ENCODE measurements at regions of chr9 and their contacts with region 1.

Region 1: DNA sequence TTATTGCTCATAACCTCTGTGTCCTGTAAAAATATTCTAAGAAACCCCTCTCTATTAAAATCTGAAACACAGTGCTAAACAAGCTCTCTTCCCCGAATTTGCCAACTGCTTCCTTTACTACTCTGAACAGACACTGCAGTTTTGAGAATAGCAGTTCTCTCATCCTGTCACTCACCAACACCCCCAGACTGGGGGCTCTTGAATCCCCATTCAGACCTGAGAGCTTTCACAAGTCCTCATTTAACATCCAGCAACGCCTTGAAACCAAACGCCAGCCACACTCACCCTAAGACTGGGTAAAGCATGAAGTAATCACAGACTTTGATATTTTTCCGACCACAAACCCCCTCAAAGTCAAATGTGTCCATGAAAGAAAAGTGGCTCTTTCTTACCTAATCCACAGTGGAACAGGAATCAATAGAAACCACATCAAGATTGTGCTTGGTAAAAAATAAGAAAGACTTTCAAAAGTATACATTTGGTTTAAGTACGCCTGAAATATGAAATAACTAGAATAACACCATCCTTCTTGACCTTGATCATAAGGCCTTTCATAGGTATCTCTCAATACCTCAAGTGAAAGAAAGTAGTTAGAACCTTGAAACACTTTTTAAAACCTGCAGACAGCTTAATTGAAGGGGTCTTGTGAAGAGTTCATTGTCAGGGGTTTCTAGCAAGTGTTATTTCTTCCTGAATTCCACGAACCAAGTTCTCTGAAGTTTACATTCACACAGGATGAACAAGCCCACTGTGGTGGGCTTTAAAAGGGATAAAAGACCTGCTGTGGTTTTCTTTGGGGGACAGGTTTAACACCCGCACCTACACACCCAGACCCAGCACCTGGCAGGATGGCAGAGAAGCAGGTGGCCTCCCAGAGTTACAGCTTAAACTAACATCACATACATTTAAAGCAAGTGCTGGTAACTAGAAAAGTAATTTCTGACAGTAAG is 412.6 kb downstream of the MLLT3 start:
- DNase-seq: peak; percentile 70
- ATAC-seq: peak; percentile 88
- H3K4me3 Mint-ChIP-seq: peak overlapping the region; percentile 18
- H3K27ac Mint-ChIP-seq: peak overlapping the region; percentile 95
- H3K4me1 Mint-ChIP-seq: peaks cover 50% of the 10 kb centered on the region
- H3K27me3 Mint-ChIP-seq: no peaks in the 10 kb centered on the region

Region 2: GRCh38 chr9:19875291-19875920 is 334.3 kb before region 1 on chr9:
- POLR2A ChIA-PET with region 1: no interaction called
- DNase-seq: no peak
- ATAC-seq: no peak
- H3K4me3 Mint-ChIP-seq: no peak overlapping the region
- H3K27ac Mint-ChIP-seq: no peak overlapping the region
- H3K4me1 Mint-ChIP-seq: no peaks in the 10 kb centered on the region
- H3K27me3 Mint-ChIP-seq: peaks cover 30% of the 10 kb centered on the region

Region 3: DNA sequence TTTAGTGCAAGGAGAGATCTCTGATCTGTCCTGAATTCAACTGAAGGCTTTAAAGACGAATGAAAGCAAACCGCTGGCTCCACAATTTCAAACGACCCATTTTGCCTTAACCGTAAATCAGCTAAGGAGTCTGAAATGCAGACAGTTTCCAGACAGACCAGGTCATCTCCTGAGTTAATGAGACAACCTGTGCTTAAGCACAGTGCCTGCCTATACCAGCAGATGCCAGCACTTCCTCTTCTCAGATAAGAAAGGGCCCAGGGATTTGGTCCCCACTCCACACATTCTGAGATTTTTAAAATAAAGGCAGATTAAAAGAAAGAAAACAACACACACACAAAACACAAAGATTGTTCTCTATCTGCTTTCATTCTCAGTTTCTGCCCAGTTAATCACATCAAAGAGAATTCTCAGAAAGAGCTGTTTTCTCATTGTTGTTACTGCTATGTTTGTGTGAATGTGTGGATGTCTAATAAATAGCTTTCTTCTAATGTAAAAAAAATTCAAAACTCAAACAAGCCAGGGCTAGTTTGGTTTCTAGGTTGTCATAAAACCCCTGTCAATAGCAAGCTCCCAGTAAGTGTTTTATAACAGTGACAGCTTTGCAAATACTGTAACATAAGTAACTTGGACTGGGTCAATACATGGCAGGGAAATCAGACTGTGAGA is 263.1 kb before region 1 on chr9:
- POLR2A ChIA-PET with region 1: interaction called, 13 read pairs
- DNase-seq: no peak
- ATAC-seq: peak; percentile 98
- H3K4me3 Mint-ChIP-seq: no peak overlapping the region
- H3K27ac Mint-ChIP-seq: peak overlapping the region; percentile 72
- H3K4me1 Mint-ChIP-seq: peaks cover 30% of the 10 kb centered on the region
- H3K27me3 Mint-ChIP-seq: peaks cover 4% of the 10 kb centered on the region

Region 4: GRCh38 chr9:20197976-20198685 is 11.5 kb before region 1 on chr9:
- POLR2A ChIA-PET with region 1: interaction called, 13 read pairs
- DNase-seq: no peak
- ATAC-seq: peak; percentile 88
- H3K4me3 Mint-ChIP-seq: peak overlapping the region; percentile 60
- H3K27ac Mint-ChIP-seq: peak overlapping the region; percentile 79
- H3K4me1 Mint-ChIP-seq: peaks cover 30% of the 10 kb centered on the region
- H3K27me3 Mint-ChIP-seq: no peaks in the 10 kb centered on the region

Region 5: DNA sequence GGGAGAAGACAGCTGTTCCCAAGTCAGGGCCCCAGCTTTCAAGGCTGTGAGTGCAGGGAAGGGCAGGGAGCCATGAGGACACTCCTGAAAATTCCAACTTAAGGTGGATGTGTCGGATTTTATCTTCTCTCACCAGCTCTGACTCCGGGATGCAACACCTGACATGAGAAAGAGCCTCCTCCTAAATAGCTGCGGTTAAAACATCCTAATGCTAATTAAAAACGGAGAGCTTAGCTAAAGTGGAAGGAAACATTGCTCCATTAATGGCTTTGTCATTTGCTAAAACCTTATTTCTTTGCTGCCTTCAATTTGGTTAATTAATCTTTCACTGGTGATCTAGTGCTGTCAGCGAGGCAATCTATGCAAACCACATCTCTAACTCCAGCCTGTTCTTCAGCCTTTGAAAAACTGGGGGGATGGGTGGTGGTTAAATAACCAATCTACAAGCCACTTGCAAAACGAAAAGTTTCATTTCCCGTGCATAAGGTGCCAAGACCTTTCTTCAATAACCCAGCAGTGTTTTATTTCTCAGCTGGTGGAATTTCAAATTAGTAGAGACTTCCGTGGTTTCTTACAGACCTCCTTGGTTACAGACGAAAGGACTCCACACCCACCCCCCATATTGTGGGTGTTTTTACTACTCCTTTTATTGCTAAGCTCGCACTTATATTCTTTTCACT is 33.0 kb after region 1 on chr9:
- POLR2A ChIA-PET with region 1: interaction called, 37 read pairs
- DNase-seq: peak; percentile 43
- ATAC-seq: peak; percentile 84
- H3K4me3 Mint-ChIP-seq: peak overlapping the region; percentile 14
- H3K27ac Mint-ChIP-seq: peak overlapping the region; percentile 80
- H3K4me1 Mint-ChIP-seq: peaks cover 76% of the 10 kb centered on the region
- H3K27me3 Mint-ChIP-seq: no peaks in the 10 kb centered on the region

Region 6: GRCh38 chr9:20361656-20362570 is 152.2 kb after region 1 on chr9:
- POLR2A ChIA-PET with region 1: interaction called, 10 read pairs
- DNase-seq: no peak
- ATAC-seq: peak; percentile 89
- H3K4me3 Mint-ChIP-seq: peak overlapping the region; percentile 54
- H3K27ac Mint-ChIP-seq: peak overlapping the region; percentile 90
- H3K4me1 Mint-ChIP-seq: peaks cover 64% of the 10 kb centered on the region
- H3K27me3 Mint-ChIP-seq: no peaks in the 10 kb centered on the region

Measured in activated naive CD8-positive, alpha-beta T cell treated with anti-CD3 and anti-CD28 coated beads, Interleukin-2, amount 10 ng/mL, durations not matched to agents 7 days and 5 days (primary cell).